ENCODE measurements at regions of chr15 and their contacts with region 1.

Region 1: GRCh38 chr15:98635848-98636247 is 12.5 kb upstream of the IGF1R start:
- DNase-seq: no peak
- CTCF ChIP-seq: no peak

Region 2: DNA sequence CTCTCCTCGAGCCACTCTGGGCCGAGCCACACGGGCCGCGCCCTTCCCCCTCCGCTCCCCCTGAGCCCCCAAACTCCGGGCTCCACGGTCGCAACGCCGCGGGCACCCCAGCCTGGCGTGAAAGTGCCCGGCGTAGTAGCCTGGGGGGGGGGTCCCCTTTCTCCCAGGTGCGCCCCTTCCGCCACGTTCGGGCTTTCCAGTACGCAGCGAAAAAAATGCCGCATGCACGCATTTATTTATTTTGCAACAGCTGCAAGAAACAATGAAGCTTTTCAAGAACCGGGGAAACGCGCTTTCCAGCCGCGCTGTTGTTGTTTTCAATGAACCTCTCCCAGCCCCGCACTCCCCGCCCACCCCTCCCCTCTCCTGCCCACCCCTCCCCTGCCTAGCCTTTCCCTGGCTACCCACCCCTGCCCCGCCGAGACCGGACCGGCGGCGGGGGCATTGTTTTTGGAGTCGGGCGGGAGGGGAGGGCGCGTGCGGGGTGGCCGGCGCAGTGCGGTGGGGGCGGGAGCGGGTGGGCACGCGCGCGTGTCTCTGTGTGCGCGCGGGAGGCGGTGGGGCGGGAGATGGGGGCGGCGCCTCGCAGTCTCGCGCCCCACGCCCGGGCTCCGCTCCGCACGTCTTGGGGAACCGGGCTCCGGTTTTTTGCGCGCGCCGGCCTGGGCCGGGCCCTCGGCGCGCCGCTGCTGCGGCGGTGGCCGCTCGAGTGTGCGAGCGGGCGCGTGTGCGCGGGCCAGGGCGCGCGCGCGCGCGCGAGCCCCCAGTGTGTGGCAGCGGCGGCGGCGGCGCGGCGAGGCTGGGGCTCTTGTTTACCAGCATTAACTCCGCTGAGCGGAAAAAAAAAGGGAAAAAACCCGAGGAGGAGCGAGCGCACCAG is 12.2 kb after region 1 on chr15 and contains the start of gene IGF1R:
- CTCF ChIA-PET with region 1: interaction called, 14 read pairs
- POLR2A ChIA-PET with region 1: no interaction called
- DNase-seq: peak; percentile 86
- CTCF ChIP-seq: no peak

Region 3: GRCh38 chr15:98779463-98780071 is 143.7 kb after region 1 on chr15:
- CTCF ChIA-PET with region 1: no interaction called
- POLR2A ChIA-PET with region 1: no interaction called
- DNase-seq: peak; percentile 72
- CTCF ChIP-seq: peak; percentile 96

Measured in GM10248 (cell line).